Activated CD4-positive, alpha-beta memory T cell treated with anti-CD3 and anti-CD28 coated beads, Interleukin-2, amount 10 ng/mL, durations not matched to agents 7 days and 5 days (primary cell): ENCODE measurements at regions of chr11 and their contacts with region 1.

Region 1: GRCh38 chr11:60978546-60979380 is 7.3 kb downstream of the CD6 start:
- DNase-seq: peak; percentile 60
- H3K4me3 Mint-ChIP-seq: peak overlapping the region; percentile 69
- H3K27ac Mint-ChIP-seq: peak overlapping the region; percentile 99
- H3K4me1 Mint-ChIP-seq: peaks cover 84% of the 10 kb centered on the region
- H3K27me3 Mint-ChIP-seq: no peaks in the 10 kb centered on the region

Region 2: GRCh38 chr11:60913793-60914632 is 64.8 kb before region 1 on chr11 and contains the start of gene TMEM109:
- CTCF ChIA-PET with region 1: interaction called, 5 read pairs
- POLR2A ChIA-PET with region 1: interaction called, 11 read pairs
- DNase-seq: peak; percentile 88
- H3K4me3 Mint-ChIP-seq: peak within 1 kb of the TSS; percentile 96
- H3K27ac Mint-ChIP-seq: peak within 1 kb of the TSS; percentile 95
- H3K4me1 Mint-ChIP-seq: peaks cover 46% of the 10 kb centered on the region
- H3K27me3 Mint-ChIP-seq: peaks cover 7% of the 10 kb centered on the region
- total RNA-seq, gene TMEM109: 101 to 110 TPM

Region 3: DNA sequence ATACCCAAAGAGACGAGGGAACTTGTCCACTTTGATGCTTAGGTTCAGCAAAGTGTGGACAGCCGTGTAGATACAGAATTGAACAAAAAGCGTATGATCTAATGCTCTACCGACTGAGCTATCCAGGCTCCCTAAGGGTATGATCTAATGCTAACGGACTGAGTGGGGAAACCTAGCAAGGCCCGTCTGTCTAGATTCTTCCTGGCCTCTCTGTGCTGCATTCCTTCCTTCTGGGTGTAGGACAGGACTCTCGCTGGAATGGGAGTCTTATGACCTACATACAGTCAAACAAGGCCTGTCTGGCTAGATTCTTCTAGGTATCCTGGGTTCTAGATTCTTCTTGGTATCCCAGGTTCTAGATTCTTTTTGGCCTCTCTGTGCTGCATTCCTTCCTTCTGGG is 18.4 kb before region 1 on chr11:
- CTCF ChIA-PET with region 1: no interaction called
- POLR2A ChIA-PET with region 1: no interaction called
- DNase-seq: no peak
- H3K4me3 Mint-ChIP-seq: no peak overlapping the region
- H3K27ac Mint-ChIP-seq: no peak overlapping the region
- H3K4me1 Mint-ChIP-seq: no peaks in the 10 kb centered on the region
- H3K27me3 Mint-ChIP-seq: peaks cover 26% of the 10 kb centered on the region

Region 4: GRCh38 chr11:61004180-61004611 is 25.4 kb after region 1 on chr11:
- CTCF ChIA-PET with region 1: interaction called, 3 read pairs
- POLR2A ChIA-PET with region 1: interaction called, 53 read pairs
- DNase-seq: peak; percentile 43
- H3K4me3 Mint-ChIP-seq: peak overlapping the region; percentile 53
- H3K27ac Mint-ChIP-seq: peak overlapping the region; percentile 83
- H3K4me1 Mint-ChIP-seq: peaks cover 77% of the 10 kb centered on the region
- H3K27me3 Mint-ChIP-seq: no peaks in the 10 kb centered on the region

Region 5: DNA sequence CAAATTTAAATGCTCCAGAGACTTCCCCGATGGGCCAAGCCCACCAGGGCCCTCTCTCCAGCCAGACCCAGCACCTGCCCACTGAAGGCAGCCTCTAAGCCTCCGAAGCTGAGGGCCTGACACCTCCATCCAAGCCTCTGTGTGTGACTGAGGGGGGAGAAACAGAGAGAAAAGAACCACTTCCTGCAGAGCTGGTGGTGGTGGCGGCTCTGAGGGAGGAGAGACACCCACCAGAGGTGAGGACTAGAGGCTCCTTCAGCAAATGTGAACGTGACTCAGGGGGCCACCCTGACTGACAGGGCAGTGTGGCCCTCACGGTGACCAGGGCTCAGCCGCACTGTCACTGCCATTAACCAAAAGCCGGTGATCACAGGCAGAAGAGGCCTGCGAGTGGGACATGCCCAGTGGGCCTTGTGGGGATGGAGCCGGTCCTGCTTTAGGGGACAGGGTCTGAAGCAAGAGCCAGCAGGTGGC is 92.5 kb after region 1 on chr11:
- CTCF ChIA-PET with region 1: no interaction called
- POLR2A ChIA-PET with region 1: interaction called, 101 read pairs
- DNase-seq: peak; percentile 83
- H3K4me3 Mint-ChIP-seq: peak overlapping the region; percentile 40
- H3K27ac Mint-ChIP-seq: peak overlapping the region; percentile 93
- H3K4me1 Mint-ChIP-seq: peaks cover 91% of the 10 kb centered on the region
- H3K27me3 Mint-ChIP-seq: no peaks in the 10 kb centered on the region

Region 6: GRCh38 chr11:61091373-61092279 is 112.9 kb after region 1 on chr11:
- CTCF ChIA-PET with region 1: interaction called, 3 read pairs
- POLR2A ChIA-PET with region 1: interaction called, 18 read pairs
- DNase-seq: peak; percentile 54
- H3K4me3 Mint-ChIP-seq: peak overlapping the region; percentile 77
- H3K27ac Mint-ChIP-seq: peak overlapping the region; percentile 96
- H3K4me1 Mint-ChIP-seq: peaks cover 69% of the 10 kb centered on the region
- H3K27me3 Mint-ChIP-seq: no peaks in the 10 kb centered on the region